Posterior vena cava (tissue), 2 donors: ENCODE measurements at regions of chr10 and their contacts with region 1.

Region 1: GRCh38 chr10:121608469-121609190 is 10.4 kb upstream of the FGFR2 start:
- DNase-seq: no peak

Region 2: DNA sequence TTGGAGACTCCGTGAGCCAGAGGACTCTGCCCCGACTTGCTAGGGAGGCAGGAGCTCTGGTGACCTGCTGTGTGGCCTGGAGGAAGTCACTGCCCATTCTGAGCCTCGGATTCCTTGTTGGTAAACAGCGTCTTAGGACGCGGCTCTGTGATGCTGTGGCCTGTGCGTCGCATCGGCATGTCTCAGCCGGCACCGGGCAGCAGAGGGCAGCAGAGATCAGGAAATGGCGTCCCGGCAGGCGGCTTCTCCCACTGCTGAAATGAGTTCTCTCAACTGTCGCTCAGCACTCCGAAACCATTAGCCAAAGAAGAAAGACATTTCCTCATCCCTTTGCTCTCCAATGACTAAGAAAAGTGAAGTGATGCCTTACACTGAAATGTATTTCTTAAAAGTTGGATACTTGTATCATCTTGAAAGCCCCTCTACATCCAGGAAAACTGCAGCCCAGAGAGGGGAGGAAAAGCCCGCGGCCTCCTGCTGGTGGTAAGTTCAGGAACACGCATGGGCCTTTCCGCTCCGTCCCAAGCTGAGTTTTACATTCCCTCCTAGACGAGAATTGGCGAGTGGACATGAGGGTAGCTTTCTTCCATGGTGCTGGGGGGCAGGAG is 665.7 kb before region 1 on chr10:
- intact Hi-C with region 1: loop called (anchors 2 to 10 kb)
- DNase-seq: peak; percentile 94

Region 3: DNA sequence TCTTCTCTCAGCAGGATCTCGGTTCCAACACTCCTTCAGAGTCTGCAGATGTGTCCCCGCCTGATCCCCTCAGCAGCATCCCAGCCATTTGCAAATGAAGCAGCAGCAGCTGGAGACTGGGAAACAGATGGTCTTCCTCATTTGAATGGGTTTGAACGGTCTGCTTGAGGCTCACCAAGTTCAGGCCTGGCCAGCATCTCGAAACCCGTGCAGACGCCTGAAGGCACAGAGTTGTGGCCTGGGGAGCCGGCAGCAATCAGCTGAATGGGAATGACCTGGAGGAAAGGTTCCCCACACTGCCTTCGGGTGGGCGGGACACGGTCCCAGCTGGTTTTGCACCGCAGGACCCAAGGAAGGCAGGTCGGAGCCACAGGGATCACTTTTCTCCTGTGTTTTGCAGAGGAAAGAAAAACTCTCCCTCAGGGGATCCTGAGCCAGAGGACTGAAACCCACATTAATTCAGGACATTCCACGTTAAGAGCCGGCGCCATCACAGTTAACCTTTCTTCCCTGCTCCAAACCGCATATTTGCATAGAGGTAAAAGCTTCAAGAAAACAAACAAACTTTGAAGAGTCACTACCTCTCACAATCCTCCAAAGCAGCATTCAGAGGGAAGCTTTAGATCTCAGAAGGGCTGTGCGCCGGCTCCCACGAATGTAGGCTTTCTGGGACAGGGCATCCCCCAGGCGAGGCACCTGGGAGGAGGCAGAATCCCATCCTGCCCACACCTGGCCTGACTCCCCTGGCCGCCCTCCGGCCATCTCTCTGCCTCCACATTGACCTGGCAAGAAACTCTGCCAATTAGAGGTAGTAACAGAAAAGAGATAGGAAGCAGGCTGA is 28.1 kb before region 1 on chr10:
- intact Hi-C with region 1: no loop called
- DNase-seq: no peak